ENCODE measurements at regions of chr10 and their contacts with region 1.

Region 1: GRCh38 chr10:119725828-119726675 is at the start of gene INPP5F:
- DNase-seq: peak; percentile 97
- H3K4me3 ChIP-seq: peak within 1 kb of the TSS; percentile 56 to 81 (median 74)
- H3K27ac ChIP-seq: peak within 1 kb of the TSS; percentile 80
- H3K4me1 ChIP-seq: peaks cover 20% of the 10 kb centered on the region
- H3K27me3 ChIP-seq: no peaks in the 10 kb centered on the region
- CTCF ChIP-seq: no peak
- POLR2A ChIP-seq: peak; percentile 68
- total RNA-seq, gene INPP5F: 20.3 and 26.6 TPM in 2 replicates

Region 2: DNA sequence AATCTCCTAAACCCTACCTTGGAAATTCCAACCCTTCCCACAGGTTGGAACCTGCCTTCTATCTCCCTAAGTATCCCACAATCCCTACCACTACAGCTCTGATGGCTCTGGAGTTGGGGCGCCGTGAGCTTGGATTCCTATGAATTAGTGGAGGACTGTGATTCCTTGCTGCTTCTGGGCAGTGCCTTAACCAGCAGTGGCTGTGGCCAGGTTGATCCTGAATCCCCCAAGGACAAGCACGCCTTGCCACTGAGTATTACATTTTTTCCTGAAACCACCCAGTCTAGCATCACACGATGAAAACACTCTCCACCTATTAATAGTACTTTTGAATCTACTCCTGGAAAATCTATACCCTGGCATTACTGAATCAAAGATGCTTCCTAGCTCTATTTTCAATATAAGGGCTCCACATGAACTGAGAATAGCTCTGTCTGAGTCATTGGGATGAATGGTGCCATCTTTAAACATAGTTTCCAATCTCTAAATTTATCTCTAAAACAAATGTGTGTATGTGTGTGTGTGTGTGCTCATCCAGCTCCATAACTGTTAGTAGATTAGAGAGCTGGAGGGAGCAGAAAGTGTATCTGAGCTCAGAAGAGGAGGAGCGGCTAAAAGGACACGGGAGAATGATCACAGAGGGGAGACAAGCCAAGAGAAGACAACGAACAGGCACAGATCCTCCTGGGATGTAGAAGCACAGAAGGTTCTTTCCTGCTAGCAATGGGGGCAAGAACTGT is 12.1 kb before region 1 on chr10:
- CTCF ChIA-PET with region 1: interaction called, 10 read pairs
- POLR2A ChIA-PET with region 1: no interaction called
- dilution Hi-C with region 1: no loop called
- intact Hi-C with region 1: no loop called
- DNase-seq: no peak
- H3K4me3 ChIP-seq: no peak overlapping the region
- H3K27ac ChIP-seq: no peak overlapping the region
- H3K4me1 ChIP-seq: no peaks in the 10 kb centered on the region
- H3K27me3 ChIP-seq: no peaks in the 10 kb centered on the region
- CTCF ChIP-seq: no peak
- POLR2A ChIP-seq: no peak

Region 3: GRCh38 chr10:119737827-119738226 is 11.8 kb after region 1 on chr10:
- CTCF ChIA-PET with region 1: interaction called, 23 read pairs
- POLR2A ChIA-PET with region 1: interaction called, 8 read pairs
- dilution Hi-C with region 1: no loop called
- intact Hi-C with region 1: loop called (anchors 1 kb)
- DNase-seq: peak; percentile 94
- H3K4me3 ChIP-seq: peak overlapping the region in 1 of 3 experiments; percentile 31
- H3K27ac ChIP-seq: peak overlapping the region; percentile 62
- H3K4me1 ChIP-seq: peaks cover 24% of the 10 kb centered on the region
- H3K27me3 ChIP-seq: no peaks in the 10 kb centered on the region
- CTCF ChIP-seq: no peak
- POLR2A ChIP-seq: no peak

Region 4: DNA sequence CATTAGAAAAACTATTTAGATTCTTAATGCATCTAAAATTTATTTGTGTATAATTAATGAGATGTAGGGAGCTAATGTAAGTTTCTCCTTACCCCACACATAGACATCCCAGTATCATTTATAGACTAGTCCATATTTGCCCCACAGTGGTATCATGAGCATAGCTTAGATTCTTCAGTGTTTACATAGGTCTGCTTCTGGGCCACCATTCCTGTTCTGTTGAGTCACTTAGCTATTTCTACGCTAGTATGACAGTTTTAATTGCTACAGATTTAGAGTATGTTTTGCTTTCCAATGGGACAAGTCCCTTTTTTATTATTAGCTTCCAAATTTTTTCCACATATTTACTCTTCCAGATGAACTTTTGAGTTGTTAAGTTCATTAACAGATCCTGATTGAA is 77.2 kb after region 1 on chr10:
- CTCF ChIA-PET with region 1: no interaction called
- POLR2A ChIA-PET with region 1: no interaction called
- dilution Hi-C with region 1: no loop called
- intact Hi-C with region 1: no loop called
- DNase-seq: no peak
- H3K4me3 ChIP-seq: no peak overlapping the region
- H3K27ac ChIP-seq: no peak overlapping the region
- H3K4me1 ChIP-seq: peaks cover 12% of the 10 kb centered on the region
- H3K27me3 ChIP-seq: no peaks in the 10 kb centered on the region
- CTCF ChIP-seq: no peak
- POLR2A ChIP-seq: no peak

Measured in endothelial cell of umbilical vein (primary cell).